Right ventricle myocardium inferior (tissue), 1 donor: ENCODE measurements at regions of chr2 and their contacts with region 1.

Region 1: GRCh38 chr2:172674034-172674967 is 61.3 kb upstream of the RAPGEF4 start:
- DNase-seq: peak; percentile 76
- ATAC-seq: peak; percentile 80

Region 2: DNA sequence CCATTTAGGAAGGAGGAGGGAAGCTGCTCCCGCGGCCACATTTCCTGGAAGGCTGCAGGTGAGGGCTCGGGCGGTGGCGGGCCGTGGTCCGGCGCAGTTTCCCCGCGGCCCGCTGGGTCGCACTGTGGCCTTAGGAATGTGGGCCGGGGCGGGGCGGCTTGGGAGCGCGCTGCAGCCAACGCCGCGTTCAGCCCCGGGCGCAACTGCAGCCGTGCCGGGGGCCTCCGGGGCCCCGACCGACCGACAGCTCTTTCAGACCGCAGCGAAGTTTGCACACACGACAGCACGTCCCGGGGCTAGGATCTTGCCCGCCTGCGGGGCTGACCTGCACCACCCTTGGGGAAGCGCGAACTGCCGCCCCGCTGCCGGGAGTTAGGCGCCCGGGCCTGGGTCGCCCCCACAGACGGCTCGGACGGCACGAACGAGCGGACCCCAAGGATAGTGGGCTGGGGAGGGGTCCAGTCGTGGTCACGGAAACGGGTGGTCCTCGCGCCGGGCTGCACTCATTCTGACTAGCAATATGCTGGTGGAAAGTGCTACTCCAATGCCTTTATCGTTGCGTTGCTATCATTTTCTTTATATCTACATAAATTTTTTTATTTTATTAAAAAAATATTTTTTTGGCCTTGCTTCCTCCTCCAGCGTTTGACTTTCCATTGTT is 501.7 kb before region 1 on chr2:
- intact Hi-C with region 1: loop called (anchors 10 kb)
- DNase-seq: peak; percentile 88
- ATAC-seq: peak; percentile 99

Region 3: GRCh38 chr2:172525606-172526005 is 148.7 kb before region 1 on chr2:
- intact Hi-C with region 1: no loop called
- DNase-seq: no peak
- ATAC-seq: no peak

Region 4: GRCh38 chr2:172596776-172597175 is 77.5 kb before region 1 on chr2:
- intact Hi-C with region 1: loop called (anchors 10 kb)
- DNase-seq: no peak
- ATAC-seq: no peak